ENCODE measurements at regions of chr5 and their contacts with region 1.

Region 1: GRCh38 chr5:72611118-72611730 is 104.0 kb upstream of the ZNF366 start:
- DNase-seq: peak; percentile 43
- H3K4me3 ChIP-seq: no peak overlapping the region
- H3K27ac ChIP-seq: no peak overlapping the region
- H3K4me1 ChIP-seq: peaks cover 5% of the 10 kb centered on the region
- H3K27me3 ChIP-seq: no peaks in the 10 kb centered on the region
- CTCF ChIP-seq: peak; percentile 94 to 99

Region 2: GRCh38 chr5:72550595-72550994 is 60.6 kb before region 1 on chr5:
- CTCF ChIA-PET with region 1: interaction called, 28 read pairs
- dilution Hi-C with region 1: no loop called
- in situ Hi-C with region 1: no loop called
- intact Hi-C with region 1: no loop called
- DNase-seq: no peak
- H3K4me3 ChIP-seq: no peak overlapping the region
- H3K27ac ChIP-seq: no peak overlapping the region
- H3K4me1 ChIP-seq: peaks cover 14% of the 10 kb centered on the region
- H3K27me3 ChIP-seq: no peaks in the 10 kb centered on the region
- CTCF ChIP-seq: no peak

Region 3: DNA sequence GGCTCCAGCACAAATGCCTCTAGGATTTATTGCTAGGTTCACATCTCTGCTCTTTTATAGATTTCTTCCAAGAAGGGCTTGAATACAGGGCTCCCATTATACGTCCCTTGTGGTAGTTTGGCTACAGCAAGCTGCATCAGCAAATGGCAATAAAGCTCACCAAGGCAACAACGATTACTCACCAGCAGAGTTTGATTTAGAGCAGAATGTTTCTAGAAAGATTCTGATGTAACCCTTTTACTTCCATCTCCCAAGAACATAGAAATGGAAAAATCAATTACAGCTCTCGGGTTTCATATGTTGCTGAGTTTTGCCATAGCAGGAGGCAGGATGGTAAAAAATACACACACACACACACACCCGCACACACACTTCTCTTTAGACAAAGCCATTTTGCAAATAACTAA is 81.0 kb after region 1 on chr5:
- CTCF ChIA-PET with region 1: no interaction called
- dilution Hi-C with region 1: loop called (anchors 5 kb)
- in situ Hi-C with region 1: no loop called
- intact Hi-C with region 1: no loop called
- DNase-seq: no peak
- H3K4me3 ChIP-seq: no peak overlapping the region
- H3K27ac ChIP-seq: no peak overlapping the region
- H3K4me1 ChIP-seq: no peaks in the 10 kb centered on the region
- H3K27me3 ChIP-seq: peaks cover 4% of the 10 kb centered on the region
- CTCF ChIP-seq: no peak

Region 4: GRCh38 chr5:72816311-72817145 is 205.3 kb after region 1 on chr5 and contains the start of gene TNPO1:
- CTCF ChIA-PET with region 1: interaction called, 30 read pairs
- dilution Hi-C with region 1: no loop called
- in situ Hi-C with region 1: loop called in 1 of 2 experiments (anchors 5 kb)
- intact Hi-C with region 1: loop called (anchors 1 kb)
- DNase-seq: peak; percentile 93
- H3K4me3 ChIP-seq: peak within 1 kb of the TSS; percentile 79 to 96 (median 90)
- H3K27ac ChIP-seq: peak within 1 kb of the TSS; percentile 95
- H3K4me1 ChIP-seq: peaks cover 6% of the 10 kb centered on the region
- H3K27me3 ChIP-seq: no peaks in the 10 kb centered on the region
- CTCF ChIP-seq: no peak
- total RNA-seq, gene TNPO1: 126 to 179 TPM

Region 5: GRCh38 chr5:72842816-72843215 is 231.6 kb after region 1 on chr5:
- CTCF ChIA-PET with region 1: interaction called, 3 read pairs
- dilution Hi-C with region 1: no loop called
- in situ Hi-C with region 1: no loop called
- intact Hi-C with region 1: loop called (anchors 1 kb)
- DNase-seq: peak; percentile 55
- H3K4me3 ChIP-seq: no peak overlapping the region
- H3K27ac ChIP-seq: no peak overlapping the region
- H3K4me1 ChIP-seq: peaks cover 27% of the 10 kb centered on the region
- H3K27me3 ChIP-seq: no peaks in the 10 kb centered on the region
- CTCF ChIP-seq: peak in 1 of 2 donors; percentile 34

Region 6: DNA sequence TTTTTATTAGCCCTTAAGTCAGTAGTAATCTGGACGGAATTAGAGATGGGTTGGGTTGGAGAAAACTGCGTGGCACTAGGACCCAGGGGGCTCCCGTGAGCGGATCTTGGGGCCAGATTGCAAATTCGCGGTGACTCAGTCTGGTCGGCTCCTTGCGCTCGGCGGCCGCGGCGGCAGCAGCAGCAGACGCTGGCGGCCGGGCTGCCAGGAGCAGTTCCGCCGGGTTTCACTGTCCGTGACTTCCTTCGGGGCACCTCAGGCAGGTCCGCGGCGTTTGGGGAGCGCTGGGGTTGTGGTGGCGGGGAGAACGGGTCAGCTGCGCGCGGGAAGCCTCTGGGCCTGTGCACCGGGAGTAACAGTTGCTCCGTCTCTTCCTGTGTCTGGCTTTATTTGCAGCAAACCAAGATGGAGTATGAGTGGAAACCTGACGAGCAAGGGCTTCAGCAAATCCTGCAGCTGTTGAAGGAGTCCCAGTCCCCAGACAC is 236.8 kb after region 1 on chr5:
- CTCF ChIA-PET with region 1: no interaction called
- dilution Hi-C with region 1: no loop called
- in situ Hi-C with region 1: no loop called
- intact Hi-C with region 1: loop called (anchors 1 kb)
- DNase-seq: peak; percentile 90
- H3K4me3 ChIP-seq: peak overlapping the region; percentile 88 to 99 (median 94)
- H3K27ac ChIP-seq: peak overlapping the region; percentile 82
- H3K4me1 ChIP-seq: peaks cover 24% of the 10 kb centered on the region
- H3K27me3 ChIP-seq: no peaks in the 10 kb centered on the region
- CTCF ChIP-seq: no peak

Measured in mammary epithelial cell (primary cell).